ENCODE measurements at regions of chr17 and their contacts with region 1.

Region 1: GRCh38 chr17:59311130-59311920 is 20.1 kb upstream of the YPEL2 start:
- DNase-seq: peak; percentile 51
- ATAC-seq: peak; percentile 99
- H3K4me3 Mint-ChIP-seq: no peak overlapping the region
- H3K27ac Mint-ChIP-seq: no peak overlapping the region
- H3K4me1 Mint-ChIP-seq: no peaks in the 10 kb centered on the region
- H3K27me3 Mint-ChIP-seq: no peaks in the 10 kb centered on the region
- CTCF ChIP-seq: peak; percentile 96

Region 2: GRCh38 chr17:59084154-59084553 is 227.2 kb before region 1 on chr17:
- CTCF ChIA-PET with region 1: no interaction called
- POLR2A ChIA-PET with region 1: no interaction called
- intact Hi-C with region 1: no loop called
- DNase-seq: no peak
- ATAC-seq: no peak
- H3K4me3 Mint-ChIP-seq: no peak overlapping the region
- H3K27ac Mint-ChIP-seq: no peak overlapping the region
- H3K4me1 Mint-ChIP-seq: peaks cover 2% of the 10 kb centered on the region
- H3K27me3 Mint-ChIP-seq: no peaks in the 10 kb centered on the region
- CTCF ChIP-seq: no peak

Region 3: GRCh38 chr17:59230764-59231163 is 80.6 kb before region 1 on chr17:
- CTCF ChIA-PET with region 1: no interaction called
- POLR2A ChIA-PET with region 1: no interaction called
- intact Hi-C with region 1: no loop called
- DNase-seq: no peak
- ATAC-seq: no peak
- H3K4me3 Mint-ChIP-seq: no peak overlapping the region
- H3K27ac Mint-ChIP-seq: no peak overlapping the region
- H3K4me1 Mint-ChIP-seq: peaks cover 2% of the 10 kb centered on the region
- H3K27me3 Mint-ChIP-seq: no peaks in the 10 kb centered on the region
- CTCF ChIP-seq: no peak

Region 4: DNA sequence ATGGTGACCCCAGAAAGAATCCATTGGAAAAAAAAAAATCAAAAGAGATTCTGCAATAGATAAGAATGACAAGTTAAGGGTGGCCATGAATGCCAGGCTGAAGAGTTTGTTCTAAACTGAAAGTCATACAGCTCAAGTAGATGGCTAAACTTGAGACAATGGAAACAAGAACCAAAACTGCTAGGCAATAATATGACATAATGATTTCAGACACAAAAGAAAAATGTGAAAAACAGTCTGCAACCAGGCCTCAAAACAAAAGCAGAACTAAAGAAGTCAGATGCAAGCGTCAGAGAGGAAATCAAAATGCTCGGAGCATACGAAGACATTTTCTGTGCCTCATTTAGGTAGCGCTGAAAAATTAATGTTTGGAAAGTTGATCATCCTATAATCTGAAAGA is 34.3 kb before region 1 on chr17:
- CTCF ChIA-PET with region 1: no interaction called
- POLR2A ChIA-PET with region 1: no interaction called
- intact Hi-C with region 1: no loop called
- DNase-seq: no peak
- ATAC-seq: no peak
- H3K4me3 Mint-ChIP-seq: no peak overlapping the region
- H3K27ac Mint-ChIP-seq: no peak overlapping the region
- H3K4me1 Mint-ChIP-seq: no peaks in the 10 kb centered on the region
- H3K27me3 Mint-ChIP-seq: no peaks in the 10 kb centered on the region
- CTCF ChIP-seq: no peak

Region 5: DNA sequence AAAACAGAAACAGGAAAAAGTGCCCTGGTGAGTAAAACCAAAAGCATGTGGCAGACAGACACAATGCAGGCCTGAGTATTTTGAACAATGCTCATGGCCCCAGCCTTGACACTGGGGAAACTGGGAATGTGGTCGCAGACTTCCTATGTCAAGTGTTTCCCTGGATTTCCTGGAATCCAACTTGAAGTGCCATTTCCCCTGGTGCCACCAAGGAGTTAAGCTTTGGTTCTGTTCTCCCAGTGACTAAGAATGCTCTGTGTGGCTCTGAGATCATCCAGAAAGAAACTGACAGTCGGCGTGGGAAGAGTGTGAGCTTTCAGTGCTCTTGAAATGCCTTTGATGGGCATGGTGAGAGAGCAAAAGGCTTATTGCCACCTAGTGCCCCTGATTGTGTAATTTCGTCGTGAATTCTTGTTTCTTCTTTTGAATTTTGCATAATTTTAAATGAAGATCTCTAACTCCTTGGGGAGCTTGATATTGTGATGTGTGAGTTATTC is 116.1 kb after region 1 on chr17:
- CTCF ChIA-PET with region 1: interaction called, 48 read pairs
- POLR2A ChIA-PET with region 1: interaction called, 5 read pairs
- intact Hi-C with region 1: no loop called
- DNase-seq: peak; percentile 84
- ATAC-seq: peak; percentile 98
- H3K4me3 Mint-ChIP-seq: no peak overlapping the region
- H3K27ac Mint-ChIP-seq: peak overlapping the region; percentile 9
- H3K4me1 Mint-ChIP-seq: peaks cover 20% of the 10 kb centered on the region
- H3K27me3 Mint-ChIP-seq: peaks cover 1% of the 10 kb centered on the region
- CTCF ChIP-seq: peak; percentile 33

Region 6: DNA sequence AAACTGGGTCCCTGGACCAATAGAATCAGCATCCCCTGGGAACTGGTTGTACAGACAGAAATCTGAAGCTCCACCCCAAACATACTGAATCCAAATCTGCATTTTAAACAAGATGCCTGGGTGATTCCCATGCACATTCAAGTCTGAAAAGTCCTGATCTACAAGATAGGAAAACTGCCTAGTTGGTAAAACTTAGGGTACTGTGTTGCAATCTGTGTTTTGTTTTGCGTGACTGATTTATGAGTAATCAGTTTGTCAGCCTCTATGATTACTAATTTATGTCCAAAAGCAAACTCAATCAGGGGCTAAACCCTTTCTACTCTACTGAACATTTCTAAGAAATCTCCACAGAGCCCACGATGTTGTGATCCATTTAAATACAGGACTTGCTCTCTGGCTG is 123.9 kb after region 1 on chr17:
- CTCF ChIA-PET with region 1: interaction called, 226 read pairs
- POLR2A ChIA-PET with region 1: no interaction called
- intact Hi-C with region 1: loop called (anchors 1 kb)
- DNase-seq: no peak
- ATAC-seq: peak; percentile 82
- H3K4me3 Mint-ChIP-seq: no peak overlapping the region
- H3K27ac Mint-ChIP-seq: peak overlapping the region; percentile 43
- H3K4me1 Mint-ChIP-seq: peaks cover 43% of the 10 kb centered on the region
- H3K27me3 Mint-ChIP-seq: no peaks in the 10 kb centered on the region
- CTCF ChIP-seq: no peak

Region 7: DNA sequence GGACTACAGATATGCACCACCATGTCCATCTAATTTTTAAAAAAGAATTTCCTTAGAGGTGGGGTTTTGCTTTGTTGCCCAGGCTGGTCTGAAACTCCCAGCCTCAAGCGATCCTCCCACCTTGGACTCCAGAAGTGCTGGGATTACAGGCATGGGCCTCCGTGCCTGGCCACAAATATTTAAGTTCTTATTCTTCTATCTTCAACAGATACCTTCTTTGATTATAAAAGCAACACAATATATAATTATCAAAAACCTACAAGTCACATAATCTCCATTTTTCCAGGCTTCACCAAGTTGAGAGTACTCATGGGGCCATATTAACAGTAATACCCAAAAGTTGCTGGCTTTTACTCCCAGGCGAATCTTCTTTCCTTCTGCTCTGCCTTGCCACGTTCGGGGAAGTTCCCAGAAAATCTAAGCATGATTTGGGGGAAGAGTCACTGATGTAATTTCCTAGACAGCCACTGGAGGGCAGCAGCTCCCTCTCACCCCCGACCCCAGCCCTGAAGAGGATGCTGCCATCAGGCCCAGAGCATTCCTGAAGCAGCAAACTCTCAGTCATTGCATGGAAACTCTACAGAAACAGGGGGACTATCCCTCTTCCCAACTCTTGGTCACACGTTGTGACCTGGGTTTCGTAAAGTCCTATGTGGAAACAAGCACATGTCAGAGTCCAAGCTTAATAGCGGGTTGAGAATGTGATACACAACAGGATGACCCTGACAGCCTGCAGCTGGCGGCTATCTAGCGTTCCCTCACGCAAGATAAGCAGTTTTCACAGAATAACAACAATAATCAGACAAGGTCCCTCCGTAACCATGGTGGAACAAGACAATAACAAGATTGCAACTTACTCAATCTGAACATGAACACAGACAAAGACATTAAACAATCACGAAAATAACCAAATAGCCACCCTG is 210.1 kb after region 1 on chr17:
- CTCF ChIA-PET with region 1: interaction called, 23 read pairs
- POLR2A ChIA-PET with region 1: interaction called, 5 read pairs
- intact Hi-C with region 1: loop called (anchors 10 kb)
- DNase-seq: peak; percentile 72
- ATAC-seq: peak; percentile 83
- H3K4me3 Mint-ChIP-seq: no peak overlapping the region
- H3K27ac Mint-ChIP-seq: no peak overlapping the region
- H3K4me1 Mint-ChIP-seq: peaks cover 2% of the 10 kb centered on the region
- H3K27me3 Mint-ChIP-seq: peaks cover 7% of the 10 kb centered on the region
- CTCF ChIP-seq: peak; percentile 97

Measured in activated CD8-positive, alpha-beta T cell treated with anti-CD3 and anti-CD28 coated beads for 36 hours (primary cell).